Activated CD8-positive, alpha-beta T cell treated with anti-CD3 and anti-CD28 coated beads, Interleukin-2, amount 10 ng/mL, durations not matched to agents 7 days and 5 days (primary cell): ENCODE measurements at regions of chr9 and their contacts with region 1.

Region 1: GRCh38 chr9:83649080-83649479 is 26.1 kb downstream of the IDNK start:
- DNase-seq: peak; percentile 79
- ATAC-seq: peak; percentile 87
- H3K4me3 Mint-ChIP-seq: no peak overlapping the region
- H3K27ac Mint-ChIP-seq: no peak overlapping the region
- H3K4me1 Mint-ChIP-seq: peaks cover 10% of the 10 kb centered on the region
- H3K27me3 Mint-ChIP-seq: no peaks in the 10 kb centered on the region

Region 2: DNA sequence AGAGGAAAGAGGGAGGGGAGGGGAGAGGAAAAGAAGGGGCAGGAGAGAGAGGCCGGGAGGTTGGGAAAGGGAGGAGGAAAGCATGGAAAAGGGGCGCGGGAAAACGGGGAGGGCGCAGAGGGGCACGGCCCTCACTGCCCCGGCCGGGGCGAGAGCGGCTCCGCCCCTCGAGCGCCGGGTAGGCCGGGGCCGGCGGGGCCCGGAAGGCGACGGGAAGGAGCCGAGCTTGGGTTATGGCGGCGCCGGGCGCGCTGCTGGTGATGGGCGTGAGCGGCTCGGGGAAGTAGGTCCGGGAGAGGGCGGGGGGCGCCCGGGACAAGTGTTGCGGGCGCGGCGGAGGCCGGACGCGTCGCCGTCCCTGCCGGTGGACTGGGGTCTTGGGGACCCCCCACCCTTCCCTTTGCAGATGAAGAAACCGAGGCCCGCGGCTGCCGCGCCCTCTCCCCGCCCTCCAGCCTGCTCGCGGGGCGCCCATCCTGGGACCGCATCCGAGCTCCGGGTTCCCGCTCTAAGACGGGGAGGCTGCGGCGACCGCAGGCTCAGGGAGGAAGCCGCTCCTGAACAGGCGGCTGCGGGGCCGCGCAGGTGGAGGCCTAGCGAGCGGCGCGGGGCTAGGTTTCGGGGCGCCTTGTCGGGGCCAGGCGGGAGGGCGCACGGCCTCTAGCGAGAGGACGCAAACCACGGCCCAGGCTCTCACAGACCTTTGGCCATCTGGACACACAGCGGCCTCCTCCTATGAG is 26.0 kb before region 1 on chr9 and contains the start of gene IDNK:
- CTCF ChIA-PET with region 1: interaction called, 40 read pairs
- POLR2A ChIA-PET with region 1: interaction called, 4 read pairs
- DNase-seq: peak; percentile 67
- ATAC-seq: peak; percentile 93
- H3K4me3 Mint-ChIP-seq: peak within 1 kb of the TSS; percentile 85
- H3K27ac Mint-ChIP-seq: peak within 1 kb of the TSS; percentile 95
- H3K4me1 Mint-ChIP-seq: peaks cover 32% of the 10 kb centered on the region
- H3K27me3 Mint-ChIP-seq: peaks cover 8% of the 10 kb centered on the region
- total RNA-seq, gene IDNK: 5.4 to 6.8 TPM

Region 3: DNA sequence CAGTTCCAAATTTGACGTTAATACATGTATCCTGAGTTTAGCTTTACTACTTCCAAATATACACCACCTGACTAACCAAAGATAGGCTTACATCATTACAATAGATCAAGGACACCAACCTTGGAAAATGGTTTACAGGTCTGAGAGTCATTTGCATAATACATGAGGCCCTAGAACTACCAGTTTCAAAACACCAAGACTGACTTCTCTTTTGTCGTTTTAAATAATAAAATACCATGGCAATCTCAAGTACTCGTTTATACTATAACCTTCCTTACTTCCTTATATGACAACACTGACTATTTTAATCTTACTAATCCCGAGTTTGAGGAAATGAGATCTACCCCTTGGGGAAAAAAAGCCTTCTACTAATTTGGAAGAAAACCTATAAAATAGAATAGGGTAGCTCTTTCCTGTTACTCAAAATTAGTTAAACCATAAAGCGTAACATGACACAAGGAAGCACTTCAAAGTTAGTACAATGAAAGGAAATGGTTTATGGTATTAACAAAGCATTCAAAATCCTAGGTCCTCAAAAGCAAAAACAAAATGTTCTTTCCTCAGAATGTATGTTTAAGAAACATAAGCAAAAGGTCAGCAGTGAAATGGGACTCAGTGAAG is 16.6 kb after region 1 on chr9:
- CTCF ChIA-PET with region 1: interaction called, 10 read pairs
- POLR2A ChIA-PET with region 1: no interaction called
- DNase-seq: no peak
- ATAC-seq: no peak
- H3K4me3 Mint-ChIP-seq: no peak overlapping the region
- H3K27ac Mint-ChIP-seq: peak overlapping the region; percentile 56
- H3K4me1 Mint-ChIP-seq: peaks cover 12% of the 10 kb centered on the region
- H3K27me3 Mint-ChIP-seq: no peaks in the 10 kb centered on the region

Region 4: DNA sequence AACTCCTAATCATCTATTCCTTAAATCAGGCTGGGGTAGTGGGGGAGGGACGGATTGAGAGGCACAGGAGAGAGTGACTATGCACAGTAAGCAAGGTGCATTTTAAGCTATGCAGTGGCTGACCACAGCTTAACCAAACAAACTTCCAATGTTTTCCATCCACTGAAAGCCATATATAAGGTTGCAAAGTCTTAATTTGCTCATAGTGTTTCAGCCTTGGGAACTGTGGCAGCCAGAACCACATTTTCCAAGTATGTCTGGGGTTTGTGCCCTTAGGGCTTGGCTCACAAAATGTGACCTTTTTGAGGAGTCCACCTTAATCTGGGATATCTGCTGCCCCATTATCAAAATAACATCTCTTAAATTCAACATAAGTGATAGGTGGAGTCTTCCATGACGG is 73.6 kb after region 1 on chr9:
- CTCF ChIA-PET with region 1: no interaction called
- POLR2A ChIA-PET with region 1: no interaction called
- DNase-seq: no peak
- ATAC-seq: no peak
- H3K4me3 Mint-ChIP-seq: no peak overlapping the region
- H3K27ac Mint-ChIP-seq: no peak overlapping the region
- H3K4me1 Mint-ChIP-seq: no peaks in the 10 kb centered on the region
- H3K27me3 Mint-ChIP-seq: peaks cover 2% of the 10 kb centered on the region